SK-N-SH (cell line): ENCODE measurements at regions of chr5 and their contacts with region 1.

Region 1: GRCh38 chr5:17189381-17190036 is 27.9 kb upstream of the BASP1 start:
- DNase-seq: peak; percentile 58
- H3K4me3 ChIP-seq: peak overlapping the region in 1 of 2 experiments; percentile 12; a peak in 1 of 4 replicates
- H3K27ac ChIP-seq: peak overlapping the region in 1 of 2 experiments; percentile 74; a peak in 2 of 4 replicates
- H3K4me1 ChIP-seq: peaks cover 0 to 40% of the 10 kb centered on the region in 2 experiments; a peak in 2 of 4 replicates
- H3K27me3 ChIP-seq: no peaks in the 10 kb centered on the region
- CTCF ChIP-seq: peak; percentile 96
- EP300 ChIP-seq: no peak
- RAD21 ChIP-seq: peak; percentile 76

Region 2: GRCh38 chr5:16483361-16483760 is 706.1 kb before region 1 on chr5:
- CTCF ChIA-PET with region 1: interaction called, 13 read pairs
- POLR2A ChIA-PET with region 1: no interaction called
- DNase-seq: no peak
- H3K4me3 ChIP-seq: no peak overlapping the region
- H3K27ac ChIP-seq: no peak overlapping the region
- H3K4me1 ChIP-seq: no peaks in the 10 kb centered on the region; a peak in 1 of 4 replicates
- H3K27me3 ChIP-seq: no peaks in the 10 kb centered on the region
- CTCF ChIP-seq: no peak
- EP300 ChIP-seq: no peak
- RAD21 ChIP-seq: no peak

Region 3: GRCh38 chr5:16784843-16785791 is 404.4 kb before region 1 on chr5:
- CTCF ChIA-PET with region 1: interaction called, 159 read pairs
- POLR2A ChIA-PET with region 1: no interaction called
- DNase-seq: no peak
- H3K4me3 ChIP-seq: no peak overlapping the region
- H3K27ac ChIP-seq: peak overlapping the region in 1 of 2 experiments; percentile 46; a peak in 2 of 4 replicates
- H3K4me1 ChIP-seq: peaks cover 2 to 28% of the 10 kb centered on the region in 2 experiments; a peak in 2 of 4 replicates
- H3K27me3 ChIP-seq: no peaks in the 10 kb centered on the region
- CTCF ChIP-seq: no peak
- EP300 ChIP-seq: no peak
- RAD21 ChIP-seq: no peak

Region 4: GRCh38 chr5:16805486-16805885 is 384.0 kb before region 1 on chr5:
- CTCF ChIA-PET with region 1: interaction called, 30 read pairs
- POLR2A ChIA-PET with region 1: no interaction called
- DNase-seq: no peak
- H3K4me3 ChIP-seq: no peak overlapping the region
- H3K27ac ChIP-seq: no peak overlapping the region
- H3K4me1 ChIP-seq: peaks cover 0 to 5% of the 10 kb centered on the region in 2 experiments; a peak in 2 of 4 replicates
- H3K27me3 ChIP-seq: no peaks in the 10 kb centered on the region
- CTCF ChIP-seq: no peak
- EP300 ChIP-seq: no peak
- RAD21 ChIP-seq: no peak

Region 5: GRCh38 chr5:16934123-16934522 is 255.4 kb before region 1 on chr5:
- CTCF ChIA-PET with region 1: interaction called, 21 read pairs
- POLR2A ChIA-PET with region 1: no interaction called
- DNase-seq: peak; percentile 83
- H3K4me3 ChIP-seq: peak overlapping the region; percentile 80 to 85
- H3K27ac ChIP-seq: peak overlapping the region in 1 of 2 experiments; percentile 77; a peak in 2 of 4 replicates
- H3K4me1 ChIP-seq: peaks cover 17 to 26% of the 10 kb centered on the region in 2 experiments; a peak in 3 of 4 replicates
- H3K27me3 ChIP-seq: no peaks in the 10 kb centered on the region
- CTCF ChIP-seq: peak; percentile 96
- EP300 ChIP-seq: no peak
- RAD21 ChIP-seq: peak; percentile 69

Region 6: DNA sequence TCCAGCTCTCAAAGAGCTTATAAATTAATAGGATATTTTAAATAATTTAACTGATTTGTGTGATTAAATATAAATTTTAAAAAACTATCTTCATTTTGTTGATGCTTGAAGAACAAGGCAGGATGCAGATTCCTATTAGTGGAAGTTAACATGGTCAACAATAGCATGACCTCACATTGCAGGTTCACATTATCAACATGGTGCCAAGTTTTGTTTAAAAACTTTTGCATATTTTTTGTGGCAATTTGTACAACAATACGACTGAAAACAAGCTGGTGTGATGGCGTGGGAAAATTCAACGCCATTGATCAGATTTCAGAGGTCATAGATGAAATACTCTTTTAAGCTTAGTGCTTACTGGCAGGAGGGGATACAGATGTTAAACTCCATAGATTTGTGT is 139.3 kb before region 1 on chr5:
- CTCF ChIA-PET with region 1: no interaction called
- POLR2A ChIA-PET with region 1: no interaction called
- DNase-seq: no peak
- H3K4me3 ChIP-seq: no peak overlapping the region
- H3K27ac ChIP-seq: no peak overlapping the region
- H3K4me1 ChIP-seq: no peaks in the 10 kb centered on the region
- H3K27me3 ChIP-seq: no peaks in the 10 kb centered on the region
- CTCF ChIP-seq: no peak
- EP300 ChIP-seq: no peak
- RAD21 ChIP-seq: no peak

Region 7: DNA sequence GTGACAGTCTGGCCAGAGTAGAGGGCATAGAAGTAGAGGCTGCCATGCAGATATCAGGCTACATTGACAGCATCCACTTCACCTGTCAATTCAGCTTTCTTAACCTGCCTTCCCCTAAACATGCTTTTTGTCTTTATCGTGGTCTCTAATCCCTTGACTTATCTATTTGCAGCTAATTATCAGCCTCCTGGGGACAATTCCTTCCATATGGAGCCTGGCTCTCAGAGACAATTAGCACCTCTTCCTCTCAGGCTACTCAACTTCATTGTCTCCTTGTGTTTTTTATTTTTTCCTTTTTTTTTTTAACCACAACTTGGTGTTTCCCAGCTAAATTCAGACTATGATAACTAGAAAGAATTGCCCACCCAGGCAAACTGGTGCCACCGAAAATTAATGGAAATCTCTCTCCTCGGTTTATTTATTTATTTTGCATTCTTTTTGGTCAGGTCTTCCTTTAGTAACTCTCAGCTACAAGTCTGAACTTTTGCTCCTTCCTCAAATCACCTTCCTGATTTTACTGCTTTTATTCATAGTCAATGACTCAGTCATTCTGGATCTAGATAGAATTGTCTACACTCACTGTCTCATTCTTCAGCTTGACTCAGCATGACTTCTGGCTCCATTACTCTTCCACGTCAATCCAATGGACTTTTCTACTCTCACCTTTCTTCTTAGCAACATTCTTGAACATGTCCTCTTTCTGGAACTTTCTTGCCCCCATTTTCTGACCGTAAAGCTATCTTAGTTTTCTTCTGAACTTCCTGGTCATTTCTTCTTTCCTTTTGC is 35.1 kb before region 1 on chr5:
- CTCF ChIA-PET with region 1: interaction called, 17 read pairs
- POLR2A ChIA-PET with region 1: no interaction called
- DNase-seq: no peak
- H3K4me3 ChIP-seq: no peak overlapping the region
- H3K27ac ChIP-seq: peak overlapping the region in 1 of 2 experiments; percentile 68; a peak in 2 of 4 replicates
- H3K4me1 ChIP-seq: peaks cover 0 to 21% of the 10 kb centered on the region in 2 experiments; a peak in 2 of 4 replicates
- H3K27me3 ChIP-seq: no peaks in the 10 kb centered on the region
- CTCF ChIP-seq: no peak
- EP300 ChIP-seq: 0 out of 4 replicates have a peak, but pooled peaks of 1 of the 2 experiments have one; percentile 30
- RAD21 ChIP-seq: no peak